OCI-LY7 (cell line): ENCODE measurements at regions of chr2 and their contacts with region 1.

Region 1: GRCh38 chr2:111120253-111121027 is at the start of gene BCL2L11:
- DNase-seq: peak; percentile 95
- H3K4me3 ChIP-seq: peak within 1 kb of the TSS; percentile 96
- H3K27ac ChIP-seq: peak within 1 kb of the TSS; percentile 75
- H3K4me1 ChIP-seq: peaks cover 48% of the 10 kb centered on the region
- CTCF ChIP-seq: peak; percentile 64
- total RNA-seq, gene BCL2L11: 10.9 and 16.0 TPM in 2 replicates

Region 2: GRCh38 chr2:110748489-110748867 is 372.0 kb before region 1 on chr2:
- CTCF ChIA-PET with region 1: no interaction called
- POLR2A ChIA-PET with region 1: no interaction called
- intact Hi-C with region 1: loop called (anchors 2 kb)
- DNase-seq: peak; percentile 95
- H3K4me3 ChIP-seq: no peak overlapping the region
- H3K27ac ChIP-seq: no peak overlapping the region
- H3K4me1 ChIP-seq: peaks cover 22% of the 10 kb centered on the region
- CTCF ChIP-seq: no peak

Region 3: DNA sequence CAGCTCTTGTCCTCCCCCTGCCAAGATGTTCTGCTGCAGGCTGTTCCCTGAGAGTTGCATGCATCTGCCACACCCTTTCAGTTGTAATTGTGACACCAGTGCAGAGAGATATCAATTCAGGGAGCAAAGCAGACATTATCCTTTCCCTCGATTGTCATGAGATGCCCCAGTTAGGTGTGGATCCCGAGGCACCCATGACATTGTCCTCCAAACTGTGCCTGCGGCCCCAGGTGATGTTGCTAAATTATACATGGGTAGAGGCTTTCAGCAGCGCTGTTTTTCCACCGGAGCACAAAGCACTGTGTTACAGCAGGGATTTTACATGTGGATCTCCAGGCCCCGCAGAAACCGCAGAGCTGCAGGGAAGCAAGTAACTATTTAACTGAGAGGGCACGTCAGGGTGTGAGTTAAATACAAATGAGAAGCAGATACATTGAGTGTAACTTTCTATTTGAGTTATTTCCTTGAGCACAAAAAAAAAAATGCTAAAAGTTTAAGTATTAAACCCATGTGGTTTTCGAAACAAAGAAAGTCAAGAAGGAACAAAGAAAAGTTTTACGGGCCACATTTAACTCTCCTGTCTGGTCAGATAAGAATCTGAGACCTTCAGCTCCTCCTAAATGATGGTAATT is 90.1 kb before region 1 on chr2:
- CTCF ChIA-PET with region 1: no interaction called
- POLR2A ChIA-PET with region 1: no interaction called
- intact Hi-C with region 1: loop called (anchors 1 kb)
- DNase-seq: no peak
- H3K4me3 ChIP-seq: no peak overlapping the region
- H3K27ac ChIP-seq: no peak overlapping the region
- H3K4me1 ChIP-seq: peaks cover 54% of the 10 kb centered on the region
- CTCF ChIP-seq: no peak

Region 4: GRCh38 chr2:111157798-111158197 is 37.4 kb after region 1 on chr2:
- CTCF ChIA-PET with region 1: interaction called, 3 read pairs
- POLR2A ChIA-PET with region 1: interaction called, 12 read pairs
- intact Hi-C with region 1: loop called (anchors 1 kb)
- DNase-seq: peak; percentile 80
- H3K4me3 ChIP-seq: peak overlapping the region; percentile 45
- H3K27ac ChIP-seq: peak overlapping the region; percentile 89
- H3K4me1 ChIP-seq: peaks cover 50% of the 10 kb centered on the region
- CTCF ChIP-seq: 0 out of 2 replicates have a peak, but pooled peaks have one; percentile 28

Region 5: DNA sequence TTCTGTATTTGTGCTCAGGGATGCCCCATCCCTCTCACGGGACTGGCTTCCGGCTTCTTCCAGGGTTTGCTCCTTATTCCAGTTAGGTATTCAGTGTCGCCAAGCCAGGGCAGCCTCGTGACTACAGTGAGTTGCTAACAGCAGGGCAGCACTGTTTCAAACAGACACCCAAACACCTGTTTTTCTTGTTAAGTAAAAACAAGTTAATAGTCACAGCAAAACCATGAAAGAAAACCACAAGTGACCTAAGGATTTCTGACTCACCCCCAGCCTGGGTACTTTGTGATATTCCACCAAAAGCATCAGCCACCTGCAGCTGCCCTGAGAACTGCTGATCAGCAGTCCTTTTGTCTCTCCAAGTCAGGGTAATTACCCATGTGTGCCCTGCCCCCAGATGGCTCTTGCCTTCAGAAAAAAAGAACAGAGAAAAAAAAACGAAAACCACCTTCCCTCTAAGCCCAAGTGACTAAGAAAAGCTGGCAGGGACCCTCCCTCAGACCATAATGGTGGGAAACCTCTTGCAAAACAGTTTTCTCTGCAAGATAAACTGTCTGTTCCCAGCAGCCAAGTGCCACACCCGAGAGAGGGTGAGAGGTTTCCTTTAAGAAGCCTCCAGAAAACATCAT is 585.4 kb after region 1 on chr2:
- CTCF ChIA-PET with region 1: no interaction called
- POLR2A ChIA-PET with region 1: no interaction called
- intact Hi-C with region 1: loop called (anchors 10 kb)
- DNase-seq: peak; percentile 98
- H3K4me3 ChIP-seq: peak overlapping the region; percentile 43
- H3K27ac ChIP-seq: peak overlapping the region; percentile 94
- H3K4me1 ChIP-seq: peaks cover 100% of the 10 kb centered on the region
- CTCF ChIP-seq: no peak